CD8-positive, alpha-beta memory T cell (primary cell): ENCODE measurements at regions of chr19 and their contacts with region 1.

Region 1: GRCh38 chr19:41883821-41884733 is 1.1 kb downstream of the ARHGEF1 start:
- DNase-seq: peak; percentile 72 to 91 (median 83)
- H3K4me3 ChIP-seq: peak overlapping the region; percentile 100
- H3K4me3 Mint-ChIP-seq: peak overlapping the region; percentile 85 to 99 (median 94)
- H3K27ac ChIP-seq: peak overlapping the region; percentile 90
- H3K27ac Mint-ChIP-seq: peak overlapping the region; percentile 91 to 98 (median 97)
- H3K4me1 ChIP-seq: peaks cover 62% of the 10 kb centered on the region
- H3K4me1 Mint-ChIP-seq: peaks cover 54 to 65% (median 57%) of the 10 kb centered on the region in 3 donors
- H3K27me3 ChIP-seq: no peaks in the 10 kb centered on the region
- H3K27me3 Mint-ChIP-seq: peaks cover 0 to 2% of the 10 kb centered on the region in 2 donors

Region 2: DNA sequence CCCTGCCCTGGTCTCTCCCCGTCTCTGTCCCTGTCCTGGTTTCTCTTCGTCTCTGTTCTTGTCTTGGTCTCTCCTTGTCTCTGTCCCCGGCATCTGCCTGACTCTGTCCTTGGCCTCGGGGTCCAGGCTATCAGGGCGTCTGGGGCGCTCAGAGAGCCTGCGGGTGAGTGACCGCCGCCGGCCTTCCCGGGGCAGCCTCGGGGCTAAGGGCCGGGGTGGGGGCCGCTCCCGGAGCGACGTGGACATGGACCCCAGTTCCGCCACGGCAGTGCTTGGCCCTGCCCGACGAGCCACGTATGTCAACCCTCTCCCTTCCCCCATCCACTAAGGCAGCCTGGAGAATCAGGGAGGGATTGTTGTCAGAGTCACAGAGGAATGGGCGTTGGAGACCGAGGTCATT is 13.7 kb after region 1 on chr19:
- CTCF ChIA-PET with region 1: interaction called, 53 read pairs
- POLR2A ChIA-PET with region 1: interaction called, 11 read pairs
- DNase-seq: no peak
- H3K4me3 ChIP-seq: no peak overlapping the region
- H3K4me3 Mint-ChIP-seq: peak overlapping the region in 2 of 7 donors; percentile 8 to 9
- H3K27ac ChIP-seq: no peak overlapping the region
- H3K27ac Mint-ChIP-seq: peak overlapping the region in 5 of 8 donors; percentile 17 to 83 (median 70)
- H3K4me1 ChIP-seq: peaks cover 50% of the 10 kb centered on the region
- H3K4me1 Mint-ChIP-seq: peaks cover 39 to 71% (median 65%) of the 10 kb centered on the region in 3 donors
- H3K27me3 ChIP-seq: no peaks in the 10 kb centered on the region
- H3K27me3 Mint-ChIP-seq: no peaks in the 10 kb centered on the region

Region 3: DNA sequence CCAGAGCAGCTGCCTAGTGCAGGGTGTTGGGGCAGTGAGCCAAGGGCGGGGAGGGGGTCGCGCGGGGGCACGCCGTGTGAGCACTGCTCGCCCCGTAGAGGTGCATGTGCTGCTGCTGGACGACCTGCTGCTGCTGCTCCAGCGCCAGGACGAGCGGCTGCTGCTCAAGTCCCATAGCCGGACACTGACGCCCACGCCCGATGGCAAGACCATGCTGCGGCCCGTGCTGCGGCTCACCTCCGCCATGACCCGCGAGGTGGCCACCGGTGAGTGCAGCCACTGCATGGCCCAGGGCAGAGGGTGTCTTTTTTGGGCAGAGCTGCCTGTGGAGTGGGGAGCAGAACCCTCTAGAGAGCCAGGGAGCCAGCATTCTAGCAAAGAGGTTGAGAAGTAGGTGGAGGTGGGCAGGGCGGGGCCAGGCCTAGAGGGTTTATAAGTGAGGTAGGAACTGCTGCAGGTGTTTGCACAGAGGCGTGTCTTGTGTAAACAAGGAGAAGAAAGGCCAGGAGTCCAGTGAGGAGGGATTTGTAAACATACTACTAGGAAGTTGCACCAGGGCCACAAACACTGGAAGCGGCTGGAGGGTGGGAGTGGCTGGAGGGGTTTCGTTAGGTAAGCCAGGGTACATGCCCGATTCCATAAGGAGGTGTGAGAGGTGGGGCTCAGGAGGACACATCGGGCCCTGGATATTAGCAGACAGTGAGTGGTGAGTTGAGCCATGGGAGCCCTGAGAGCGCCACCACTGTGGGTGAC is 20.2 kb after region 1 on chr19:
- CTCF ChIA-PET with region 1: interaction called, 53 read pairs
- POLR2A ChIA-PET with region 1: interaction called, 36 read pairs
- DNase-seq: no peak
- H3K4me3 ChIP-seq: no peak overlapping the region
- H3K4me3 Mint-ChIP-seq: peak overlapping the region in 1 of 7 donors; percentile 26
- H3K27ac ChIP-seq: no peak overlapping the region
- H3K27ac Mint-ChIP-seq: peak overlapping the region in 3 of 8 donors; percentile 33 to 83 (median 64)
- H3K4me1 ChIP-seq: peaks cover 16% of the 10 kb centered on the region
- H3K4me1 Mint-ChIP-seq: peaks cover 27 to 67% (median 41%) of the 10 kb centered on the region in 3 donors
- H3K27me3 ChIP-seq: no peaks in the 10 kb centered on the region
- H3K27me3 Mint-ChIP-seq: peaks cover 0 to 2% of the 10 kb centered on the region in 2 donors

Region 4: DNA sequence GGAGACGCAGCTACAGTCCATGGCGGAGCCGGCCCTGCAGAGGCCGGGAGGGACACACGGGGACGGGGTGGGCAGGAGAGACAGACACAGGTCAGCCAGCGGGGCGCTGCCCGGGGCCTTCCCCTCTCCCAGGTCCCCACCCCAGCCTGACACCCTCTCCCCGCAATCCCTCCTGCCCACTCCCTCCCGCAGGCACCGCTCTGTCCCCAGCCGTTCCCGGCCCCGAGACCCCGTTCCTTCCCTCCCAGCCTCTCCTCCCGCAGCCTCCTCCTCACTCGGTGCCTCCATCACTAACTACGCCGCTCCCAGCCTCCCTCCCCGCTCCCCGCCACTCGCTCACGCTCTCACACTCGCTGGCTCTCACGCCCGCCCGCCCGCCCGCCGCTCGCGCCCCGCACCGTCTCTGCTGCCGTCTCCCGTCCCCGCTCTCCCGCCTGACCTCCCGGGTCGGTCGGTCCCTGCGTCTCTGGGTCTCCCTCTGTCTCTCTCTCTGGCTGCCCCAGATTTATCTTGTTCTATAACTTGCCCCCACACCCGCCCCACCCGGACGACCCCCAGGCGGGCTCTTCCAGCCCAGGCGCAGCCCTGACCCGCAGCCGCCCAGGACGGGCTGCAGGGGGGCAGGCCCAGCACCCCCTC is 28.9 kb after region 1 on chr19:
- CTCF ChIA-PET with region 1: no interaction called
- POLR2A ChIA-PET with region 1: interaction called, 36 read pairs
- DNase-seq: no peak
- H3K4me3 ChIP-seq: no peak overlapping the region
- H3K4me3 Mint-ChIP-seq: peak overlapping the region in 3 of 7 donors; percentile 45 to 81 (median 50)
- H3K27ac ChIP-seq: no peak overlapping the region
- H3K27ac Mint-ChIP-seq: no peak overlapping the region
- H3K4me1 ChIP-seq: peaks cover 55% of the 10 kb centered on the region
- H3K4me1 Mint-ChIP-seq: peaks cover 35 to 55% (median 37%) of the 10 kb centered on the region in 3 donors
- H3K27me3 ChIP-seq: peaks cover 36% of the 10 kb centered on the region
- H3K27me3 Mint-ChIP-seq: peaks cover 8 to 19% of the 10 kb centered on the region in 2 donors

Region 5: GRCh38 chr19:42132851-42133528 is 248.9 kb after region 1 on chr19:
- CTCF ChIA-PET with region 1: no interaction called
- POLR2A ChIA-PET with region 1: no interaction called
- DNase-seq: peak; percentile 79 to 86 (median 80)
- H3K4me3 ChIP-seq: peak overlapping the region; percentile 90
- H3K4me3 Mint-ChIP-seq: peak overlapping the region; percentile 77 to 95 (median 87)
- H3K27ac ChIP-seq: peak overlapping the region; percentile 56
- H3K27ac Mint-ChIP-seq: peak overlapping the region; percentile 72 to 97 (median 96)
- H3K4me1 ChIP-seq: peaks cover 43% of the 10 kb centered on the region
- H3K4me1 Mint-ChIP-seq: peaks cover 56 to 80% (median 63%) of the 10 kb centered on the region in 3 donors
- H3K27me3 ChIP-seq: no peaks in the 10 kb centered on the region
- H3K27me3 Mint-ChIP-seq: no peaks in the 10 kb centered on the region